Posterior vena cava (tissue), 2 donors: ENCODE measurements at regions of chr20 and their contacts with region 1.

Region 1: DNA sequence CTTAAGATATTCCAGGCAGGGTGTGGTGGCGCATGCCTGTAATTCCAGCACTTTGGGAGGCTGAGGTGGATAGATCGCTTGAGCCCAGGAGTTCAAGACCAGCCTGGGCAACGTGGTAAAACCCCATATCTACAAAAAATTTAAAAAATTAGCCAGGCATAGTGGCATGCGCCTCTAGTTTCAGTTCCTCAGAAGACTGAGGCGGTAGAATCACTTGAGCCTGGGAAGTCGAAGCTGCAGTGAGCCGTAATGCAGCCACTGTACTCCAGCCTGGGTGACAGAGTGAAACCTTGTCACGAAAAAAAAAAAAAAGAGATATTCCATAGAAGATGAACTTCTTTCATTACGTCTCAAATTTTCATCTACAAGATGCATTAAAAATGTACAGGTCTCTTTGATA is 46.7 kb upstream of the ISM1 start:
- DNase-seq: no peak

Region 2: DNA sequence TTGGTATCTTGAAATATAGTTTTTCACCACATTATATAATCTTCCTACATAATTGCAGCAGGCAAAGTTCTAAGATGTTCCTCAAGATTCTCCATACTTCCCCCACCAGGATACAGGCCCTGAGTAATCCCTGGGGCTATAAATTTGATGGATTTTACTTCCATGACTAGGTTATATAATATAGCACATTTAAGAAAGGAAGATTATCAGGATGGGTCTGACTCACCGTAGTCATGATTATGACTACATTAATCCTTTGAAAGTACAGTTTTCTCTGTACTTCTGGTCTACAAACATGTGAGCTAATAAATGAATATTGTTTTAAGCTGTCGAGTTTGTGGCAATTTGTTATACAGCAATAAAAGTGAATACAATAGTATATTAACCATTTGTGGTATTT is 943.4 kb after region 1 on chr20:
- intact Hi-C with region 1: loop called in 1 of 2 experiments (anchors 5 kb)
- DNase-seq: no peak